ENCODE measurements at regions of chr5 and their contacts with region 1.

Region 1: GRCh38 chr5:132771503-132771998 is 5.5 kb downstream of the SEPTIN8 start:
- DNase-seq: peak; percentile 43 to 63
- ATAC-seq: peak; percentile 42 to 72 (median 58)
- H3K4me3 ChIP-seq: no peak overlapping the region
- H3K27ac ChIP-seq: peak overlapping the region in 9 of 10 donors; percentile 13 to 91 (median 74)
- H3K4me1 ChIP-seq: peaks cover 25 to 96% (median 81%) of the 10 kb centered on the region in 9 donors
- H3K27me3 ChIP-seq: peaks cover 0 to 5% (median 0%) of the 10 kb centered on the region in 7 donors
- CTCF ChIP-seq: no peak

Region 2: GRCh38 chr5:132736853-132737833 is 34.4 kb before region 1 on chr5 and contains the start of gene KIF3A:
- intact Hi-C with region 1: loop called in 2 of 10 experiments (anchors 5 kb)
- DNase-seq: peak; percentile 95 to 99
- ATAC-seq: peak; percentile 99 to 100 (median 100)
- H3K4me3 ChIP-seq: peak within 1 kb of the TSS; percentile 63 to 99 (median 84)
- H3K27ac ChIP-seq: peak within 1 kb of the TSS in 9 of 10 donors; percentile 50 to 82 (median 72)
- H3K4me1 ChIP-seq: peaks cover 0 to 21% (median 17%) of the 10 kb centered on the region in 9 donors
- H3K27me3 ChIP-seq: peaks cover 0 to 11% (median 0%) of the 10 kb centered on the region in 7 donors
- CTCF ChIP-seq: peak in 2 of 9 donors; percentile 26 to 35
- total RNA-seq, gene KIF3A: 10.1 to 18.6 (median 13.1) TPM

Measured in heart right ventricle (tissue), 16 donors.